AG04450 (cell line): ENCODE measurements at regions of chr2 and their contacts with region 1.

Region 1: DNA sequence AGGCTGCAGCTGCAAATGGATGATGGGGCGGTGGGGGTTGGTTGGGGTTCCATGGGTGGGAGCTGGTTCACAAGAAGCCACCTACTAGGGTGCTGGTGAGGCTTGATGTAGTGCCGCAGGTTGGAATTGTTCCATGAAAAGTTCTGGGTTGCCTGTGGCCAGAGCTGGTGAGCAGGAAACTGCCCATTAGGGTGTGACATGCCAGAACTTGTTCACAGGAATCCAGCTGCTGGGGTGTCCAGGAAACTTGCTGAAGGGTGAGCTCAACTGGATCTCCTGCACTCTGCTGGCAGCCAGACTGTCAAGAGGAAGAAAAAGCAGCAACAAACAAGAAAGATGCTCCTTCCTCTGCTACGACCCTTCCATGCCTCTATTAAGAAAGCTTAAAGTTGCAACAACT is 48.8 kb downstream of the MAP3K20 start:
- DNase-seq: no peak
- H3K4me3 ChIP-seq: no peak overlapping the region
- H3K27ac ChIP-seq: no peak overlapping the region
- H3K27me3 ChIP-seq: no peaks in the 10 kb centered on the region
- CTCF ChIP-seq: no peak

Region 2: DNA sequence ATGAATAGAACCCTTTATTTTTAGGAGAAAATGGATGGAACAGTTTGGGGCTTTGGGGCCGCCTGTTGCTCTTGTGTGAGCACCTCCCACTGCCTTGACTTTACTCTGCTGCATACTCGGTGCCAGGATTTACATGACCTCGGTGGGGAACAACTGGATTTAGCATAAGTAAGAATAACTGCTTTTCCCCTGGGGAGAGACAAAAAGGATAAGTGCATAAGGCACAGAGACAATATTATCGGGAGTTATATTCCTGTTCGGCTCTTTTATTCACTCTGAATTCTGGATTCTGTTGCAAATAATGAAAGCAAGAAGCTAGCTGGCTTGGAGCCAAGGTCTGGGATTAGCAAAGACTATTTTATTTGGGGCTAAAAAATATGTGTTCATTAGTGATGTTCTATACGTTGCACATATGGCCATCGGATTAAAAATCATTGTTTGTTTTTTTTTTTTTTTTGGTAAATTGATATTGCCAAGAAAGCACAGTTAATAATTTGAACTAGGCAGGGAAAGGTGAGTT is 1532.3 kb before region 1 on chr2:
- CTCF ChIA-PET with region 1: interaction called, 13 read pairs
- POLR2A ChIA-PET with region 1: no interaction called
- DNase-seq: no peak
- H3K4me3 ChIP-seq: no peak overlapping the region
- H3K27ac ChIP-seq: no peak overlapping the region
- H3K27me3 ChIP-seq: no peaks in the 10 kb centered on the region
- CTCF ChIP-seq: no peak

Region 3: GRCh38 chr2:172282944-172283343 is 841.5 kb before region 1 on chr2:
- CTCF ChIA-PET with region 1: no interaction called
- POLR2A ChIA-PET with region 1: no interaction called
- DNase-seq: peak; percentile 88
- H3K4me3 ChIP-seq: no peak overlapping the region
- H3K27ac ChIP-seq: no peak overlapping the region
- H3K27me3 ChIP-seq: no peaks in the 10 kb centered on the region
- CTCF ChIP-seq: no peak